Caco-2 (cell line): ENCODE measurements at regions of chr4 and their contacts with region 1.

Region 1: GRCh38 chr4:169634975-169635374 is 14.6 kb downstream of the CLCN3 start:
- DNase-seq: peak in 1 of 2 experiments; percentile 67
- H3K4me3 ChIP-seq: no peak overlapping the region
- H3K4me3 Mint-ChIP-seq: peak overlapping the region; percentile 12
- H3K27ac Mint-ChIP-seq: no peak overlapping the region
- H3K4me1 ChIP-seq: peaks cover 16% of the 10 kb centered on the region
- H3K4me1 Mint-ChIP-seq: peaks cover 11% of the 10 kb centered on the region
- H3K27me3 ChIP-seq: no peaks in the 10 kb centered on the region
- H3K27me3 Mint-ChIP-seq: no peaks in the 10 kb centered on the region
- CTCF ChIP-seq: no peak

Region 2: GRCh38 chr4:169418846-169419245 is 216.1 kb before region 1 on chr4:
- CTCF ChIA-PET with region 1: no interaction called
- POLR2A ChIA-PET with region 1: no interaction called
- intact Hi-C with region 1: no loop called
- DNase-seq: no peak
- H3K4me3 ChIP-seq: no peak overlapping the region
- H3K4me3 Mint-ChIP-seq: no peak overlapping the region
- H3K27ac Mint-ChIP-seq: no peak overlapping the region
- H3K4me1 ChIP-seq: no peaks in the 10 kb centered on the region
- H3K4me1 Mint-ChIP-seq: no peaks in the 10 kb centered on the region
- H3K27me3 ChIP-seq: no peaks in the 10 kb centered on the region
- H3K27me3 Mint-ChIP-seq: no peaks in the 10 kb centered on the region
- CTCF ChIP-seq: no peak

Region 3: DNA sequence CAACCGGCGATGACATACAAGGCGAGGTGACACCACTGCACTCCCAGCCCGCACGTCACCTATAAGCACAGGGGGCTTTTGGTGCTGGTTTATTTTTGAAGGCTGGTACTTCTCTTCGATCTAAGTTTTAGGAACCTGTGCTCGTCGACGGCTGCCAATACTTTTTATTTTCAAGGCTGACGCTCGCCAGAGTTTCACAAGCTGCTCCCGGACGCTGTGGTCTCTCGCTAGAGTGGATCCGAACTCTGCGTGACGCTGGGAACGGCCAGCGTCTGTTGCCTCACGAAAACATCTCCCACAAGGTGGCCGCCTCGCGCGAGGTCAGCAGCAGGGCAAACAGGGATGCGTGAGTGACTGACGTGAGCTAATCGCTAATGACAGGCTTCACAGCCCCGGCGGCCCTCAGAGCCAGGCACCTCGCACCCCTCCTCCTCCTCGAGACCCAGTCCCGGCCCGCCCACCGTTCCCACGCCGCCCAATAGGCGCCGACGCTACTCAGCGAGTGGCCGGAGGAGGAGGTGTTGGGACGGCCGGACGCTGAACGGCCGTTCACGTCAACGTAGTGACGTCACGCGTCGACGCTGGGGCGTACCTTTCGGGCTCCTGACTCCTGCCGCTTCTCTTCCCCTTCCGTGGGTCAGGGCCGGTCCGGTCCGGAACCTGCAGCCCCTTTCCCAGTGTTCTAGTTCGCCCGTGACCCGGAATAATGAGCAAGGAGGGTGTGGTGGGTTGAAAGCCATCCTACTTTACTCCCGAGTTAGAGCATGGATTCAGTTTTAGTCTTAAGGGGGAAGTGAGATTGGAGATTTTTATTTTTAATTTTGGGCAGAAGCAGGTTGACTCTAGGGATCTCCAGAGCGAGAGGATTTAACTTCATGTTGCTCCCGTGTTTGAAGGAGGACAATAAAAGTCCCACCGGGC is 14.8 kb before region 1 on chr4 and contains the start of gene CLCN3:
- CTCF ChIA-PET with region 1: no interaction called
- POLR2A ChIA-PET with region 1: interaction called, 4 read pairs
- intact Hi-C with region 1: loop called (anchors 2 kb)
- DNase-seq: peak; percentile 97
- H3K4me3 ChIP-seq: peak within 1 kb of the TSS; percentile 62
- H3K4me3 Mint-ChIP-seq: peak within 1 kb of the TSS; percentile 84
- H3K27ac Mint-ChIP-seq: peak within 1 kb of the TSS; percentile 95
- H3K4me1 ChIP-seq: peaks cover 19% of the 10 kb centered on the region
- H3K4me1 Mint-ChIP-seq: no peaks in the 10 kb centered on the region
- H3K27me3 ChIP-seq: no peaks in the 10 kb centered on the region
- H3K27me3 Mint-ChIP-seq: no peaks in the 10 kb centered on the region
- CTCF ChIP-seq: no peak
- total RNA-seq, gene CLCN3: 36.4 and 42.1 TPM in 2 replicates

Region 4: DNA sequence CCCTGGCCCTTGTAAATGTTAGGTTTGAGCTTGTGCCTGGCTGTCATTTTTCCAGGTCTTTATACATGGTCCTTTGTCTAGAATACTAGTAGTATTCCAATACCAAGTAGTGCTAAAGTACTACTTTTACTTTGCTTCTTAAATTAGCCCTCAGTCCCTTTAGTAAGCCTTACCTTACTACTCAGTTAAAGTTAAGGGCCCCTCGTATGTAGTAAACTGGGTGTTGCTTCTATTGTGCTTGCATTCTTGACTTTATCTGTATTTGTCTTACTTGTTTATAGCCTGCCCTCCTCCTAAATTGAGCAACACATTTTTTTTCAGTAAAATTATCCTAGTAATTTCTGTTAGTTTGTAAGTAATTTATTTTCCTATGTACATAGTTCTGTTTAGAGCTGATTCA is 10.7 kb after region 1 on chr4:
- CTCF ChIA-PET with region 1: no interaction called
- POLR2A ChIA-PET with region 1: no interaction called
- intact Hi-C with region 1: loop called (anchors 1 kb)
- DNase-seq: no peak
- H3K4me3 ChIP-seq: no peak overlapping the region
- H3K4me3 Mint-ChIP-seq: no peak overlapping the region
- H3K27ac Mint-ChIP-seq: no peak overlapping the region
- H3K4me1 ChIP-seq: peaks cover 17% of the 10 kb centered on the region
- H3K4me1 Mint-ChIP-seq: no peaks in the 10 kb centered on the region
- H3K27me3 ChIP-seq: no peaks in the 10 kb centered on the region
- H3K27me3 Mint-ChIP-seq: no peaks in the 10 kb centered on the region
- CTCF ChIP-seq: no peak

Region 5: GRCh38 chr4:169659716-169660670 is 25.0 kb after region 1 on chr4:
- CTCF ChIA-PET with region 1: no interaction called
- POLR2A ChIA-PET with region 1: no interaction called
- intact Hi-C with region 1: loop called (anchors 1 kb)
- DNase-seq: peak; percentile 90
- H3K4me3 ChIP-seq: peak overlapping the region; percentile 42
- H3K4me3 Mint-ChIP-seq: peak overlapping the region; percentile 84
- H3K27ac Mint-ChIP-seq: peak overlapping the region; percentile 98
- H3K4me1 ChIP-seq: peaks cover 25% of the 10 kb centered on the region
- H3K4me1 Mint-ChIP-seq: peaks cover 7% of the 10 kb centered on the region
- H3K27me3 ChIP-seq: no peaks in the 10 kb centered on the region
- H3K27me3 Mint-ChIP-seq: no peaks in the 10 kb centered on the region
- CTCF ChIP-seq: no peak

Region 6: DNA sequence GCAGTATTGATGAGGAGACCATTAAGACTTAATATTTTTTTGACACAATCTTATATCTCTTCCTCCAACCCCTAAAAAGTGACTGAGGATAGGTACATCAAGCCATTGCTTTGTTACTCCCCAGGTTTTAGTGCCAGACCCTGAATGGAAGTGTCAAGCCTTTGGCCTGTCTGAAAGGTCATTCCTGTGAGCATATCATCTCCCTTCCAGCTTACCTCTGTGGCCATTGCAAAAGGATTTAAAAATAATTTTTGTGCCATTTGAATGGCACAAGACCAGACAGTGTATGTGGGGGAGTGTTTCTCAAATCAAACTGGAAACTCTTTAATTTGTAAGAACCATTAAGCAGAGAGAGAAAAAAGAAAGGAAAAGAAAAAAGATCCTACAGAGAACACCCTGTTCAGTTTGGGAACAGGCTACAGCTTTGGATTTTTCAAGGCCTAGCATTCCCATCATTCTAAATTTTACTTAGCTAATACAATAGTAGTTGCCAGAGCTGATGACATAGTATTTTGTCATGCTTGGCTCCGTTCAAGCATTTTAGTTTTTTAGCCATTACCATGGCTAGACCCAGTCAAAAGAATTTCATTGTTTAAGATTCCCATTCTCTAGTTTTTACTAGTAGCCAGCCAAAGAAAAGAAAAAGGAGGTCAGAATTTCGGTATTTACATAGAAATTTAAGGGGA is 73.1 kb after region 1 on chr4:
- CTCF ChIA-PET with region 1: no interaction called
- POLR2A ChIA-PET with region 1: no interaction called
- intact Hi-C with region 1: no loop called
- DNase-seq: no peak
- H3K4me3 ChIP-seq: no peak overlapping the region
- H3K4me3 Mint-ChIP-seq: no peak overlapping the region
- H3K27ac Mint-ChIP-seq: no peak overlapping the region
- H3K4me1 ChIP-seq: no peaks in the 10 kb centered on the region
- H3K4me1 Mint-ChIP-seq: no peaks in the 10 kb centered on the region
- H3K27me3 ChIP-seq: no peaks in the 10 kb centered on the region
- H3K27me3 Mint-ChIP-seq: no peaks in the 10 kb centered on the region
- CTCF ChIP-seq: no peak

Region 7: GRCh38 chr4:169723207-169723965 is 88.4 kb after region 1 on chr4:
- CTCF ChIA-PET with region 1: no interaction called
- POLR2A ChIA-PET with region 1: no interaction called
- intact Hi-C with region 1: no loop called
- DNase-seq: peak in 1 of 2 experiments; percentile 39
- H3K4me3 ChIP-seq: no peak overlapping the region
- H3K4me3 Mint-ChIP-seq: no peak overlapping the region
- H3K27ac Mint-ChIP-seq: no peak overlapping the region
- H3K4me1 ChIP-seq: no peaks in the 10 kb centered on the region
- H3K4me1 Mint-ChIP-seq: no peaks in the 10 kb centered on the region
- H3K27me3 ChIP-seq: no peaks in the 10 kb centered on the region
- H3K27me3 Mint-ChIP-seq: no peaks in the 10 kb centered on the region
- CTCF ChIP-seq: peak; percentile 19 to 48

Region 8: DNA sequence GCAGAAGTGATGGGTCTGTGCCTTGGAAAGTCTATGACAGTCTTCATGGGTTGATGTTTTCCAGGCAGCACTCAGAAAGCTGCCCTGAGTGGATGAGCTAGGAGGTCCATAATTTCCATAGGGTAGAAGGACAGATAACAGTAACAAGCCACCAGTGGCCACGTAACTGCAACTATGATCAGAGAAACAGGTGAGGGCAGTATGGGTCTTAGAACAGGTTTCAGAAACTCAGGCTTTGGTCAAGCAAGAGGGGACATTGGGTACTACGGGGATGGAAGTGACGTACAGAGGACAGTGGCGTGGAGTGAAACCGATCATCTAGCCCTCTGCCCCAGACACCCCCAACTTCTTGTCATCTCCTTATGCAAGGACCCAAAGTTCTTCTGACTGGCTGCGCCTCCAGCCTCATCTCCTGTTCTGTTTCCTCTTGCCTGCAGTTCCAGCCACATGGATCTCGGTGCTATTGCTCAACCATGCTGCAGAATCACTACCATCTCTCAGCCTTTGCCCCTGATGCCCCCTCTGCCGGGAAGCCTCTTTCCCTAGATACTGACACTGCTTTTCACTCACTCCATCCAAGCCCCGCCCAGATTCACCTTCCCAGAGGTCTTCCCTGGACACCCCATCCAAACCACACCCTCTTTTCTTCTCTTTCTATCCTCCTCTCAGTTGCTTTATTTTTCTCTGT is 267.8 kb after region 1 on chr4:
- CTCF ChIA-PET with region 1: no interaction called
- POLR2A ChIA-PET with region 1: no interaction called
- intact Hi-C with region 1: no loop called
- DNase-seq: peak in 1 of 2 experiments; percentile 22
- H3K4me3 ChIP-seq: no peak overlapping the region
- H3K4me3 Mint-ChIP-seq: no peak overlapping the region
- H3K27ac Mint-ChIP-seq: no peak overlapping the region
- H3K4me1 ChIP-seq: no peaks in the 10 kb centered on the region
- H3K4me1 Mint-ChIP-seq: no peaks in the 10 kb centered on the region
- H3K27me3 ChIP-seq: no peaks in the 10 kb centered on the region
- H3K27me3 Mint-ChIP-seq: peaks cover 11% of the 10 kb centered on the region
- CTCF ChIP-seq: peak in 1 of 2 experiments; percentile 8